Endothelial cell of umbilical vein (primary cell): ENCODE measurements at regions of chr11 and their contacts with region 1.

Region 1: GRCh38 chr11:17014838-17015626 is 818 bp upstream of the PLEKHA7 start:
- DNase-seq: peak; percentile 50
- H3K4me3 ChIP-seq: peak overlapping the region; percentile 12 to 66 (median 40)
- H3K27ac ChIP-seq: no peak overlapping the region
- H3K4me1 ChIP-seq: peaks cover 8% of the 10 kb centered on the region
- H3K27me3 ChIP-seq: no peaks in the 10 kb centered on the region
- CTCF ChIP-seq: peak; percentile 65 to 79
- POLR2A ChIP-seq: no peak

Region 2: DNA sequence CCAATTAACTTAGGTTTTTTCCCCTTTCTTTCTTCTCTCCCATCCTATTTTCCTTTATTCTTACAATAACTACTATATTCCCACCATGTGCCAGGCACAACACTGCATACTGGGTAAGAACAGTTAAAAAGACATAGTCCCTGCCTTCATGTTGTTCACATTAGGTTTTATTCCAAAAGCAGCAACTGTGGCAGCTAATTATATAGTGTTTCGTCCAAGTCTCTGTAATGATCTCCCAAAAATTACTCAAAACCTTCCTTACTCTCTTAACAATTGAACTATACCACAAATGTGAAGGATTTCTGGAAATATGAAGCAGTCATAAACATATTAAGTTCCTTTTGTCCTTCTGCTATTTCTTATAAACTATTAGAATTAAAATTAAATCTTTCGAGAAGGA is 460.7 kb before region 1 on chr11:
- CTCF ChIA-PET with region 1: no interaction called
- POLR2A ChIA-PET with region 1: no interaction called
- dilution Hi-C with region 1: no loop called
- intact Hi-C with region 1: no loop called
- DNase-seq: no peak
- H3K4me3 ChIP-seq: no peak overlapping the region
- H3K27ac ChIP-seq: no peak overlapping the region
- H3K4me1 ChIP-seq: no peaks in the 10 kb centered on the region
- H3K27me3 ChIP-seq: no peaks in the 10 kb centered on the region
- CTCF ChIP-seq: no peak
- POLR2A ChIP-seq: no peak

Region 3: GRCh38 chr11:17026487-17027082 is 11.6 kb after region 1 on chr11:
- CTCF ChIA-PET with region 1: interaction called, 10 read pairs
- POLR2A ChIA-PET with region 1: no interaction called
- dilution Hi-C with region 1: no loop called
- intact Hi-C with region 1: no loop called
- DNase-seq: no peak
- H3K4me3 ChIP-seq: no peak overlapping the region
- H3K27ac ChIP-seq: no peak overlapping the region
- H3K4me1 ChIP-seq: no peaks in the 10 kb centered on the region
- H3K27me3 ChIP-seq: no peaks in the 10 kb centered on the region
- CTCF ChIP-seq: no peak
- POLR2A ChIP-seq: no peak

Region 4: DNA sequence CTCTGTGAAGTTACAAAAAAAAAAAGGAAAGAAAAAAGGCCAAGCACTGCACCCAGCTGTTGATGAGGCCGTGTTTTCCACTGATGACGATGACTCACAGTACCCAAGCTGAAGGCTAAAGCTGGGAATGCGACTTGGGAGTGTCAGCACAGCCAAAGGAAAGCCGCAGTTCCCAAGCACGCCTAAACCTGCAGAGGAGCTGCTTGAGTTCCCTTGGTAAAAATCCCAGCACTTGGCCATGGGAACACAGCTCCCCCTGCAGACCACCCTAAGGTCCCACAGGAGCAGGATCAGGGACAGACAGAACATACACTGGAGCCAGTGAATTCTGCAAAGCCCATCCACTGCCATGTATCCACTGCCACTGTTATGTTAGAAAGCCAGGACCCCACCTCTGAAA is 958.0 kb after region 1 on chr11:
- CTCF ChIA-PET with region 1: no interaction called
- POLR2A ChIA-PET with region 1: no interaction called
- dilution Hi-C with region 1: no loop called
- intact Hi-C with region 1: no loop called
- DNase-seq: peak; percentile 44
- H3K4me3 ChIP-seq: no peak overlapping the region
- H3K27ac ChIP-seq: no peak overlapping the region
- H3K4me1 ChIP-seq: no peaks in the 10 kb centered on the region
- H3K27me3 ChIP-seq: no peaks in the 10 kb centered on the region
- CTCF ChIP-seq: peak; percentile 56 to 77
- POLR2A ChIP-seq: no peak

Region 5: DNA sequence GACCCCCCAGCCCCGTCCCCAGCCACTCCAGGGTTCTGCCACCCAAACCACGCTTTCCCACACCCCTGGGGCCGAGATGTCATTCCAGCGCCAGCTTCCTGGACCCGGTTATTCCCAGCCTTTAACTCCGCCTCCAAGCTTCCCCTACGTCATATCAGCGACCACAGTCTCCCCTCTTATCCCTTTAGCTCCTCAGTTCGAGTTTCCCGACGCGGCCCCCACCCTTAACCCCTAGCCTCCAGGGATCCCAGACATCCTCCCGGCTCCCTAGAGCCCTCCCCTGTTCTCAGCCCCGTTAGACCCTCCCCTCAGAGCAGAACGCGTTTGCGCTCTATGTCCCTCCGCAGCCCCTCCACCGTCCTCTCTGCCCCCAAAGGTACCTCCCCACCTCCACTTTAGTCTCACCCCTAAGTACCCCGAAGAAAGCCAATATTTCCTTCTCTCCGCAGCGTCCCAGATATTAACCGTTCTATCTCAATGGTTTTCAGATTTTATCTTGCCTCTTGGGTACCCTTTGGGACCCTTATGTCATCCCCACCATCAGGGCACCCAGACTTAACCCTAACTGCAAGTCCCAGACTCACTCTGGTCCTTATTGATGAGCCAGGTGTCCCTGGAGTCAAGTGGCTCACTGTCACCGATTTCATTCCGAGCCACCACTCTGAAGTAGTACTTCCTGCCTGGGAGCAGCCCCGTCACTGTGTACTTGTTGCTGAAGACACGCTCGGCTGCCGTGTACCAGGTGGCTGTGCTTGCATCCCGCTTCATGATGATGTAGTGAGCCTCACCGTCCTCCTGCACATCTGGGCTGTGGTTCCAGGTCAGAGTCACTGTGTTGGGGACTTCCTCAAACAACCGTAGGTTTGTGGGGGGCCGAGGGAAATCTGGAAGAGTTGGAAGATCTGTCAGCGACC is 1691.6 kb after region 1 on chr11:
- CTCF ChIA-PET with region 1: no interaction called
- POLR2A ChIA-PET with region 1: no interaction called
- dilution Hi-C with region 1: no loop called
- intact Hi-C with region 1: loop called (anchors 5 kb)
- DNase-seq: peak; percentile 32
- H3K4me3 ChIP-seq: peak overlapping the region in 2 of 3 experiments; percentile 25 to 55
- H3K27ac ChIP-seq: no peak overlapping the region
- H3K4me1 ChIP-seq: peaks cover 6% of the 10 kb centered on the region
- H3K27me3 ChIP-seq: peaks cover 16 to 26% of the 10 kb centered on the region in 2 experiments
- CTCF ChIP-seq: no peak
- POLR2A ChIP-seq: no peak